ENCODE measurements at regions of chr14 and their contacts with region 1.

Region 1: DNA sequence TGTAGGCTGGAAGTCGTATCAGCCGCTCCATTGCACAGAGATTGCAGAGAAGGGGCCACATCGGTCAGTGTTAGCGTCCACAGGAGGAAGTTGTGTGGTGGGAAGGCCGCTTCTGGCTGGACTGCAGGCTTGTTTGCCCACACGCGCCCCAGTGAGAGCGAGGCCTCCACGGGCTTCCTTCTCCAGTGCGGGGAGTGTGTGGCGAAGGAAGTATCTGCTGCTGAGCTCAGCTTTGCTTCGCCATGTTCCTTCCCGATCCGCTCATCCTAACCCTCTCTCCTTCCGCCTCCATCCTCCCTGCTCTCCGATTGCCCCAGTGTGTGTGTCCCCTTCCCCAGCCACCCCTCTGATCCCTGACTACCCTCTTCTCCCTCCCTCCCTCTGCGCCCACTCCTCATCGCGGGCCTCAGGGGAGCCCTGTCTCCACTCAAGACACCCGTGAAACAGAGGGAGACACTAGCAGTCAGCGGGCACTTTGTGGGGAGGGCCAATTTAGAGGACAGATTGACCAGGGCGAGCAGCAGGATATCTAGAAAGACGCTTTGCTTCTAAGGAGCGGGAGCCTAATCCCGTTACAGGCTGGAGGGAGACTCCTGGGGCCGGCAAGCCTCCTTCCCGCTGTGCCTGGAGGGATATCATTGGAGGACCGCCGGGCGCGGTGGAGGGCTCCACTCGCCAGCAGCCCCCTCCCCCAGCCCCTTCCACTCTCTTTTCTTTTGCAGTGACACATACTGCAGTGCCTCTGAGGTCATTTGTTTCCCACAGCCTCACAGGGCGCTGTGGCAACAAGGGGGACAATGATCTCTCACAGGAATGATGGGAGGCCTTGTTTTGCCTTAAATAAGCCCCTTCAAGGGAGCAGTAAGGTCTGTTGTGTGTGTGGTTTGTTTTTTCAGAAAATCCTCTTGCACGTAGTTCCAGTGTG is 428.8 kb downstream of the ZFP36L1 start:
- DNase-seq: no peak
- ATAC-seq: no peak
- H3K4me3 Mint-ChIP-seq: no peak overlapping the region
- H3K27ac Mint-ChIP-seq: peak overlapping the region; percentile 91
- H3K4me1 Mint-ChIP-seq: peaks cover 92% of the 10 kb centered on the region
- H3K27me3 Mint-ChIP-seq: no peaks in the 10 kb centered on the region
- CTCF ChIP-seq: no peak

Region 2: DNA sequence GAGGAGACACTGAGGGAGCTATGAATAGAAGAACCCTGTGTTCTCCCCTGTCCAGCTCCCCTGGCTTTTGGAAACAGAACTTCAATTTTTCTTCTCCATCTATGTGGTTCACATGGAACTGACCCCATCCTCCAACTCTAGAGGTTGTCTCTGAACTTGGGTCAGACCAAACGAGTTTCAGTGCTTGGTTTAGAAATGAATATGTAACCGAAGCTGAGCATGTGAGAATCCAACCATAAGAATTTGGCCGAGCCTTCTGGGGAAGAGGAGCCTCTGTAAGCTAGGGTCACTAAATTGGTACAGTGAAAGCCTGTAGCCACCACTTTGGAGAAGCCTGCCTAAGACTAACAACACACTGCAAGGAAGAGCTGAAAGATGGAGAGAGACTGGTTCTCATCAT is 35.6 kb before region 1 on chr14:
- CTCF ChIA-PET with region 1: no interaction called
- POLR2A ChIA-PET with region 1: interaction called, 6 read pairs
- intact Hi-C with region 1: loop called (anchors 2 kb)
- DNase-seq: no peak
- ATAC-seq: no peak
- H3K4me3 Mint-ChIP-seq: no peak overlapping the region
- H3K27ac Mint-ChIP-seq: peak overlapping the region; percentile 13
- H3K4me1 Mint-ChIP-seq: peaks cover 63% of the 10 kb centered on the region
- H3K27me3 Mint-ChIP-seq: no peaks in the 10 kb centered on the region
- CTCF ChIP-seq: no peak

Region 3: GRCh38 chr14:68377459-68377858 is 13.4 kb after region 1 on chr14:
- CTCF ChIA-PET with region 1: interaction called, 3 read pairs
- POLR2A ChIA-PET with region 1: interaction called, 22 read pairs
- intact Hi-C with region 1: no loop called
- DNase-seq: no peak
- ATAC-seq: peak; percentile 43
- H3K4me3 Mint-ChIP-seq: peak overlapping the region; percentile 50
- H3K27ac Mint-ChIP-seq: peak overlapping the region; percentile 83
- H3K4me1 Mint-ChIP-seq: peaks cover 69% of the 10 kb centered on the region
- H3K27me3 Mint-ChIP-seq: no peaks in the 10 kb centered on the region
- CTCF ChIP-seq: no peak

Region 4: GRCh38 chr14:68418174-68419118 is 54.3 kb after region 1 on chr14:
- CTCF ChIA-PET with region 1: no interaction called
- POLR2A ChIA-PET with region 1: no interaction called
- intact Hi-C with region 1: no loop called
- DNase-seq: no peak
- ATAC-seq: no peak
- H3K4me3 Mint-ChIP-seq: no peak overlapping the region
- H3K27ac Mint-ChIP-seq: no peak overlapping the region
- H3K4me1 Mint-ChIP-seq: peaks cover 45% of the 10 kb centered on the region
- H3K27me3 Mint-ChIP-seq: no peaks in the 10 kb centered on the region
- CTCF ChIP-seq: no peak

Measured in activated B cell treated with CpG ODN at 0.5 μM for 24 hours (primary cell).